ENCODE measurements at regions of chr7 and their contacts with region 1.

Region 1: GRCh38 chr7:148962823-148963582 is 65.3 kb downstream of the PDIA4 start:
- DNase-seq: peak; percentile 78
- H3K4me3 ChIP-seq: peak overlapping the region; percentile 70
- H3K27ac ChIP-seq: no peak overlapping the region
- H3K4me1 ChIP-seq: peaks cover 17% of the 10 kb centered on the region
- CTCF ChIP-seq: peak; percentile 96

Region 2: DNA sequence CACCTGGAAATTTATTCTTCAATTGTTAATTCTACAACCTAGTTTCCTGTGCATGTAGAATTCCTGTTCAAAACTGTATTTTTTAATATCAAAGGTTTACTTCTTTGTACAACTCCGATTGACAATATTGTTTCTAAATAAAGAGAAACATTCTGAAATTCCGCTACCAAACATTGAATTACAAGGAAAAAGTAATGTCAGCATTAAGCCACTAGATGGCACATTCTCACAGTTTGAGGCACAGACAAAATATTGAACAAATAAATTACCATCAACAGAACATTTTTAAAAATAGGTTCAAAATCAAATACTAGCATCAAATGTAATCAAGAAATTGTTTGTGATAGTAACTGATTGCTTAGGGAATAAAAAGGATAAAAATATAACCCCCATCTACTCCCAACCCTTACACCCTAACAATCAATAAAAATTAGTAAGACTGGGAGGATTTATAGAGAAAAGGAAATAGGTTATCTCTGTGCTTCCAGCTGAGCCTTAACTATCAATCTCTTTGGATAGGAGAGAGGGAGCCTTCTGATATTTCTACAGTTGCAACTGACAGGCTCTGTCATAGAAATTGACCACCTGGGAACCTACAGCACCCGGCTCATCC is 459.0 kb before region 1 on chr7:
- CTCF ChIA-PET with region 1: no interaction called
- POLR2A ChIA-PET with region 1: interaction called, 3 read pairs
- intact Hi-C with region 1: loop called (anchors 1 kb)
- DNase-seq: peak; percentile 47
- H3K4me3 ChIP-seq: no peak overlapping the region
- H3K27ac ChIP-seq: no peak overlapping the region
- H3K4me1 ChIP-seq: peaks cover 9% of the 10 kb centered on the region
- CTCF ChIP-seq: peak; percentile 98

Region 3: GRCh38 chr7:148698397-148699023 is 264.5 kb before region 1 on chr7 and contains the start of gene CUL1:
- CTCF ChIA-PET with region 1: interaction called, 3 read pairs
- POLR2A ChIA-PET with region 1: interaction called, 6 read pairs
- intact Hi-C with region 1: loop called (anchors 2 kb)
- DNase-seq: peak; percentile 84
- H3K4me3 ChIP-seq: peak within 1 kb of the TSS; percentile 83
- H3K27ac ChIP-seq: peak within 1 kb of the TSS; percentile 69
- H3K4me1 ChIP-seq: peaks cover 32% of the 10 kb centered on the region
- CTCF ChIP-seq: no peak
- total RNA-seq, gene CUL1: 36.7 and 40.5 TPM in 2 replicates

Region 4: DNA sequence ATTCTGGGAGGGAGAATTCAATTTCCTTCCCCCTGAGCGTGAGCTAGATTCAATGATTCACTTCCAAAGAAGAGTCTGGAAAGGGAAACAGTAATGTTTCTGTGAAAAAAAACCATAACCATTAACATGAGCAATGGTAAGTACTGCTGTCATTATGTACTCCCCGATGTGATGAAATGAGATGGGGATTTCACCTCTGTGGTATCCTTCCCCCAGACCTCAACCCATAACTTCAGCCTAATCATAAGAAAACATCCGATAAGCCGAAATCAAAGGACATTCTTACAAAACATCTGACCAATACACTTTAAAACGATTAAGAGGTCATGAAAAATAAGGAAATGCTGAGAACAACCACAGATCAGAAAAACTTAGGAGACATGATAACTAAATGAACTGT is 106.1 kb before region 1 on chr7:
- CTCF ChIA-PET with region 1: no interaction called
- POLR2A ChIA-PET with region 1: no interaction called
- intact Hi-C with region 1: loop called (anchors 10 kb)
- DNase-seq: no peak
- H3K4me3 ChIP-seq: no peak overlapping the region
- H3K27ac ChIP-seq: no peak overlapping the region
- H3K4me1 ChIP-seq: peaks cover 16% of the 10 kb centered on the region
- CTCF ChIP-seq: no peak

Measured in OCI-LY7 (cell line).